Activated CD4-positive, alpha-beta T cell treated with anti-CD3 and anti-CD28 coated beads for 36 hours (primary cell): ENCODE measurements at regions of chr19 and their contacts with region 1.

Region 1: DNA sequence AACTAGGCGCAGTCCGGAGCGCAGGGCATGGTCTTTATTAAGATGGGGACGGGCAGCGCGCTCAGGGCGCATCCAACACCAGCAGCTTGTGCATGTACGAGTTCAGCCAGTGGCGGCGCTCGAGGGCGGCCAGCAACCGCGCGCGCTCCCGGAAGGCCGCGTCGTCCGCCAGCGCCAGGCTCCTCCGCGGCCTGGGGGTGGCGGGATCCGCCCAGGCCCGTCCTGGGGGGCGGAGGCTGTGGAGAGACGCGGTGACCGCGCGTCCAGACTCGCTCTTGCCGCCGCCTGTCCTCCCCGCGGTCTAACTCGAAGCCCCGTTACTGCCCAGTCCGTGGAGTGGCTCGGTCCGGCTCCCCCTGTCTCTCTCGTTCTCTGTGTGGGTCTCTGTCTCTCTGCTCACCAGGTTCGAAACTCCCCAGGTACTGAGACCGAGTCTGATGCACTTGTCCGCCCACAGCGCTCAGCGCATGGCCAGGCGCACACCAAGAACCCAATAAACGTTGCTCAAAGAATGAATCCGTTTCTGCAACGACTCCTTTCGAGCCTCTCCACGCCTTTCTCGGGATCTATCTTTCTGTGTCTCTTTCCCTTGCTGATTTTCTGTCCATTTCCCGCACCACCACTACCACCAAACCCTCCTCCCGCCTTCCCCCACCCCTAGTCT is 702 bp downstream of the PTH2 start:
- DNase-seq: peak; percentile 83
- ATAC-seq: peak; percentile 77
- H3K4me3 Mint-ChIP-seq: peak overlapping the region; percentile 57
- H3K27ac Mint-ChIP-seq: no peak overlapping the region
- H3K4me1 Mint-ChIP-seq: peaks cover 43% of the 10 kb centered on the region
- H3K27me3 Mint-ChIP-seq: peaks cover 72% of the 10 kb centered on the region

Region 2: GRCh38 chr19:49409441-49410029 is 13.0 kb before region 1 on chr19:
- CTCF ChIA-PET with region 1: interaction called, 9 read pairs
- POLR2A ChIA-PET with region 1: no interaction called
- intact Hi-C with region 1: loop called in 1 of 2 experiments (anchors 2 kb)
- DNase-seq: no peak
- ATAC-seq: peak; percentile 60
- H3K4me3 Mint-ChIP-seq: peak overlapping the region; percentile 17
- H3K27ac Mint-ChIP-seq: peak overlapping the region; percentile 83
- H3K4me1 Mint-ChIP-seq: peaks cover 60% of the 10 kb centered on the region
- H3K27me3 Mint-ChIP-seq: no peaks in the 10 kb centered on the region

Region 3: DNA sequence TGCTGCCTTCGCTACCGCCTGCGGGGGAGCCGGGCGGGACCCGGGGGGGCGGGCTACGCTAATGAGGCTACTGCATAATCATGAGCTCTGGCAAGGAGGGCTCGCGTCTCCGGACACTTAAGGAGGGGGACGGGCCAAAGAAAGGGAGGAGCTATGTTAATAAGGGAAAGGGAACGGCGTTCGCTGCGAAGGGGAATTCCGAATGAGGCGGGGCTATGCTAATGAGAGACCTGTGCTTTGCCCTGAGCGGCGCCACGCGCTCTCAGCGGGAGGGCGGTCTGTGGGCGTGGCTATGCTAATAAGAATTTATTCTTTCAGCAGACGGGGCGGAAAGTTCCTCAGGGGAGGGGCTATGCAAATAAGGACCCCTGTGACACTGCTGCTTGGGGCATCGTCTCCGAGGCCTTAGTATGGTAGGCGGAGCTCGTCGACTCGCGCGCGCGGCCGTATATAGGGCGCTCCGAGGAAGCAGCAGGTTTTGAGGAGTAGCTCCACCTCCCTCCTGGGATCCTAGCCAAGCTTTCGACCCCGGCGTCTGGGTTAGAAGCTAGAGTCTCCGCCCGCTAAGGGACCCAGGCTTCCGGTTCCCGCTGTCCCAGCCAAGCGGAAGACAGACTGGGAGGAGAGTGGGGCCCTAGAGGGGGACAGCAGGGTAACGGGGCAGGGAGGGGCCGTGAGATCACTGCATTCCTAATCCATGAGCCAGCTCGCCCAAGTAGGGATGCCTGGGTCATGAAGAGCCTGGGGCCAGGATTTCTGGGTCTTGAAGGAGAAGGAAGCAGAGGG is 217.8 kb after region 1 on chr19 and contains the start of gene RRAS:
- CTCF ChIA-PET with region 1: no interaction called
- POLR2A ChIA-PET with region 1: no interaction called
- intact Hi-C with region 1: no loop called
- DNase-seq: peak; percentile 100
- ATAC-seq: peak; percentile 76
- H3K4me3 Mint-ChIP-seq: peak within 1 kb of the TSS; percentile 100
- H3K27ac Mint-ChIP-seq: peak within 1 kb of the TSS; percentile 100
- H3K4me1 Mint-ChIP-seq: peaks cover 48% of the 10 kb centered on the region
- H3K27me3 Mint-ChIP-seq: no peaks in the 10 kb centered on the region
- total RNA-seq, gene RRAS: 9.7 to 11.7 TPM